Calu3 (cell line): ENCODE measurements at regions of chr11 and their contacts with region 1.

Region 1: DNA sequence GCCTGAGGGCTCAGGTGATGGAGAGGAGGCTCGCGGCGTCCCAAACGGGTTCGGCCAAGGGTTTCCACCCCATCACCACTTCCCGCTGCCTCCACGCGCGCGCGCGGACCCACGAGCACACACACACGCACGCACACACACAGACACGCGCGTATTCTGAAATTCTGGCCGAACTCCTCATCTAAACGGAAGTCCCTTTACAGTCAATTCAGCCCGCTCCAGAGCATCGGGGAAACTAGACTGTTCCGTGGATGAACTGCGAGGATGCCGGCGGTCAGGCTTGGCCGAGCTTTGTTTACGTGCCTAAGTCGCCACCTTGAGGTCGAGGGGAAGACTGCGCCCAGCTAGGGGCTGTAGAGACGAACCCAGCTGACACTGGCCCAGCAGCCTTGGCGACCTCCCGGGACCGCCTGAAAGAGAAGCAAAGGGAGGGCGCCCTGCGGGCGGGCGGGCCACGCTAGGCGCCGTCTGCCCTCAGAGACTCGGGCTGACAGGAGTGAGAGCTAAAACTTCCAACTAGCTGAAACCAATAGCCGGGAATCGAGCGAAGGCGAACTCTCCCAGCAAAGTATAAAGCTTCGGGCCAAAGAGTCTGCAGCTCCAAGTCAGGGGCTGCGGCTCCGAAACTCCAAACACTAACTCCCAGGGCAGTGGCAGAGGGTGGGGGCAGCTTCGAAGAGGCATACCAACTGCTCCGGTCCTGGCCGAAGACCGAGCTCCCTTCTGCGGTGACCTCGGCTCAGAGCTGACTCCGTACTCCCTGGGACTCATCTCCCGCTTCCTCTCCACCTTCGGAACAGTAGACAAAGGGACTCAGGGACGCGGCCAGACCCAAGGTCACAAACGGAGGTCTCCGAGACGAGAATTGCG is 124.7 kb upstream of the C11orf58 start:
- DNase-seq: peak; percentile 89
- H3K4me3 Mint-ChIP-seq: peak overlapping the region; percentile 86
- H3K27ac Mint-ChIP-seq: no peak overlapping the region
- H3K4me1 Mint-ChIP-seq: peaks cover 12% of the 10 kb centered on the region
- H3K27me3 Mint-ChIP-seq: peaks cover 28% of the 10 kb centered on the region
- CTCF ChIP-seq: peak; percentile 80

Region 2: DNA sequence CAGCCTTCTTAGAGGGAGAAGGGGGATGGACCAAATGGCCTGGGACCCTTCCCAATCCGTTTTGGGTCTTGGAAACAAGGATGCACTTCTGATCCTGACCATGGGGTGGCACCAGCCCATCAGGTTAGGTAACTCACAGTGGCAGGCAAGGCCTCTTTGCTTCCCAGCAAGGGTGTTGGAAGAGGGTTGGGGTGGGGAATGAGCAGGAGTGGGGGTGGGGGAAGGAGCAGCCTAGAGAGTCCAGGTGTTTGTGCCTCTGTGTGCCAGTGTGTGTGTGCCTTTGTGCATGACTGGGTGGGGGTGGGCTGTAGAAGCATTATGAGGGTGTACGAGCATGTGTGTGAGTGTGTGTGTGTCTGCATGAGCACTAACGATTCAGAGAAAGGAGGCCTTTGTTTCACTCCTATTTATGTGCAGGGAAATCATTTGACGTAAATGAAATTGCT is 1285.9 kb before region 1 on chr11:
- CTCF ChIA-PET with region 1: interaction called, 4 read pairs
- intact Hi-C with region 1: loop called (anchors 5 kb)
- DNase-seq: peak; percentile 77
- H3K4me3 Mint-ChIP-seq: no peak overlapping the region
- H3K27ac Mint-ChIP-seq: no peak overlapping the region
- H3K4me1 Mint-ChIP-seq: no peaks in the 10 kb centered on the region
- H3K27me3 Mint-ChIP-seq: peaks cover 49% of the 10 kb centered on the region
- CTCF ChIP-seq: peak; percentile 58

Region 3: DNA sequence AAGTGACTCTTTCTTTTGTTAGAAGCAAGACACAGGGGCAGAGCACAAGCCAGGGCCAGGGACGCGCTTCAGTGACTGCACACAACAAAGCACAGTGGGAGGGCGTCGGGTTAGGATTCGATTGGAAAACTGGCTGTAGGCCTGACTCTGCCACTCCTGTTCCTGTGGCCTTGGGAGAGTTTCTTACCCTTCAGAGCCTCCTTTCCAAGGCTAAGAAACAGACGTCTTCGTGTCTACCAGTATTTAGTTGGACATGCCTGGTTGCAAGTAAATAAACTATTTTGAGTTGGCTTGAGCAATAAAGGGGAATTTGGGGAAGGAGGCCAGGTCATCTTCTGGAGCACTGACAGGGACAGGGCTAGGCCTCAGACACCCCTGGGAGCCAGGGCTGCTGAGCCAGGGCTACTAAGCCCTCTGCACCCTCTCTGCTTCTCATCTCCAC is 949.9 kb before region 1 on chr11:
- CTCF ChIA-PET with region 1: interaction called, 3 read pairs
- intact Hi-C with region 1: loop called (anchors 10 kb)
- DNase-seq: no peak
- H3K4me3 Mint-ChIP-seq: no peak overlapping the region
- H3K27ac Mint-ChIP-seq: peak overlapping the region; percentile 23
- H3K4me1 Mint-ChIP-seq: peaks cover 45% of the 10 kb centered on the region
- H3K27me3 Mint-ChIP-seq: no peaks in the 10 kb centered on the region
- CTCF ChIP-seq: no peak

Region 4: GRCh38 chr11:15852179-15852578 is 761.6 kb before region 1 on chr11:
- CTCF ChIA-PET with region 1: interaction called, 20 read pairs
- intact Hi-C with region 1: loop called (anchors 2 kb)
- DNase-seq: peak; percentile 42
- H3K4me3 Mint-ChIP-seq: no peak overlapping the region
- H3K27ac Mint-ChIP-seq: no peak overlapping the region
- H3K4me1 Mint-ChIP-seq: no peaks in the 10 kb centered on the region
- H3K27me3 Mint-ChIP-seq: no peaks in the 10 kb centered on the region
- CTCF ChIP-seq: peak; percentile 45

Region 5: GRCh38 chr11:16846305-16846704 is 232.6 kb after region 1 on chr11:
- CTCF ChIA-PET with region 1: no interaction called
- intact Hi-C with region 1: no loop called
- DNase-seq: no peak
- H3K4me3 Mint-ChIP-seq: no peak overlapping the region
- H3K27ac Mint-ChIP-seq: no peak overlapping the region
- H3K4me1 Mint-ChIP-seq: peaks cover 5% of the 10 kb centered on the region
- H3K27me3 Mint-ChIP-seq: no peaks in the 10 kb centered on the region
- CTCF ChIP-seq: no peak